Pancreas (tissue), 10 donors: ENCODE measurements at regions of chr7 and their contacts with region 1.

Region 1: GRCh38 chr7:32957326-32958045 is at the start of gene FKBP9:
- DNase-seq: peak; percentile 87 to 94 (median 92)
- ATAC-seq: peak; percentile 91 to 95 (median 94)
- H3K4me3 ChIP-seq: peak within 1 kb of the TSS; percentile 73 to 100 (median 92)
- H3K27ac ChIP-seq: peak within 1 kb of the TSS; percentile 67 to 89 (median 81)
- H3K4me1 ChIP-seq: no peaks in the 10 kb centered on the region
- H3K27me3 ChIP-seq: no peaks in the 10 kb centered on the region
- CTCF ChIP-seq: no peak
- total RNA-seq, gene FKBP9: 44.1 to 82.4 (median 54.8) TPM

Region 2: GRCh38 chr7:32761451-32762205 is 195.9 kb before region 1 on chr7:
- intact Hi-C with region 1: no loop called
- DNase-seq: peak in 1 of 6 donors; percentile 55
- ATAC-seq: no peak
- H3K4me3 ChIP-seq: no peak overlapping the region
- H3K27ac ChIP-seq: no peak overlapping the region
- H3K4me1 ChIP-seq: no peaks in the 10 kb centered on the region
- H3K27me3 ChIP-seq: no peaks in the 10 kb centered on the region
- CTCF ChIP-seq: no peak

Region 3: GRCh38 chr7:33062782-33063443 is 105.4 kb after region 1 on chr7:
- intact Hi-C with region 1: loop called in 1 of 3 experiments (anchors 10 kb)
- DNase-seq: peak; percentile 91 to 96 (median 94)
- ATAC-seq: peak; percentile 98 to 100 (median 98)
- H3K4me3 ChIP-seq: peak overlapping the region; percentile 77 to 98 (median 94)
- H3K27ac ChIP-seq: peak overlapping the region; percentile 80 to 97 (median 86)
- H3K4me1 ChIP-seq: peaks cover 4 to 16% (median 11%) of the 10 kb centered on the region in 3 donors
- H3K27me3 ChIP-seq: no peaks in the 10 kb centered on the region
- CTCF ChIP-seq: no peak

Region 4: GRCh38 chr7:33334349-33334748 is 376.9 kb after region 1 on chr7:
- intact Hi-C with region 1: no loop called
- DNase-seq: no peak
- ATAC-seq: no peak
- H3K4me3 ChIP-seq: no peak overlapping the region
- H3K27ac ChIP-seq: no peak overlapping the region
- H3K4me1 ChIP-seq: no peaks in the 10 kb centered on the region
- H3K27me3 ChIP-seq: no peaks in the 10 kb centered on the region
- CTCF ChIP-seq: no peak